ENCODE measurements at regions of chr11 and their contacts with region 1.

Region 1: GRCh38 chr11:120432056-120433018 is 79.2 kb upstream of the GRIK4 start:
- DNase-seq: no peak

Region 2: DNA sequence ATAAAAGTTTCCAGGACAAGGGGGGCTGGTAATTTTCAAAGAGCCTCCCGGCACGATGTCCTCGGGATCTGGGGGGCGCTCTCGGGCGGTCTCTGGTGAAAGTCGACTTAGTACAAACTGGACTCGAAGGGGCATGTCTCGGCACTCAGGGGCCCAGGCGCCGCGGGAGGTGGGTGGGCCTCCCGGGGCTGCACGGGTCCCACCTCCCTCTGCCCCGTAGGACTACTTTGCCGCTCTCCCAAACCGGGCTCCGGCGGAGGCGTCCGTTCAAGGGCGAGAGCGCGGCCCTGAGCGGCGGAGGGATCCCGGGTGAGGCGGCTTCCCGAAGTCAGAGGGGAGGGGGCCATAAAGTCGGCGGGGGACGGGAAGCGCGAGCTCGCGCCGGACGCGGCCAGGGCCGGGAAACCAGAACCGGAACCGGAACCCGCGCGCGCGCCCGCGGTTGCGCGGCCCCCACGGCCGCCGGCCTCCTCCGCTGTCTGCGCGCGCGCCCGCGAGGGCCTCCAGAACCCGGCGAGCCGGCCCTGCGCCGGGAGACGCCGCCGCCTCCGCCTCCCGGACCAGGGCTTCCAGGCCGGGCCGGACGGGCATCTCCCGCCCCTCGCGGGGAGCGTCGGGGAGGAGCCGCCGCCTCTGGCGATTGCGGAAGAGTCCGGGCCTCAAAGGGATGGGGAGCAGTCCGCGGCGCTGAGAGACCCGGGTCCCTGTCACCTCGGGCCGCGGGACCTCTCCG is 96.3 kb before region 1 on chr11 and contains the start of gene ARHGEF12:
- intact Hi-C with region 1: loop called in 1 of 2 experiments (anchors 5 kb)
- DNase-seq: peak; percentile 99
- total RNA-seq, gene ARHGEF12: 77.6 to 101 TPM

Region 3: DNA sequence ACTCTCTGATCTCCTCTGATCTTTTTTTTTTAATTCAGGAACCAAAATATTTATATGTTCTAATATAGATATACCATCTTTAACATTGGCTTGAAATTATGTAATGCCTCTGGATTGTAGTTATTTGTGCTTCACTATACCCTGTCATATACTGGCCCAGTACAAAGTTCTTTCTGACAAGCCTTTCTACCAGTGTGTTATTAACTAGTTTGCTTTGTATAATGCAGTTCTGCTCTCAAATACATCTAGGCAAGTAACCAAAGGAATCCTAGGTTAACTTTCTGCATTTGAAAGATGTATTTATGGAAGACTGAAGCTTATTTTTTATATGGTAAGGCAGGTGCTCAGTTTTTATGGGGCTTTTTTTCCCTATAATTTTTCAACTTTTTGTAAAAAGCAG is 60.0 kb before region 1 on chr11:
- intact Hi-C with region 1: loop called in 1 of 2 experiments (anchors 2 kb)
- DNase-seq: no peak

Region 4: DNA sequence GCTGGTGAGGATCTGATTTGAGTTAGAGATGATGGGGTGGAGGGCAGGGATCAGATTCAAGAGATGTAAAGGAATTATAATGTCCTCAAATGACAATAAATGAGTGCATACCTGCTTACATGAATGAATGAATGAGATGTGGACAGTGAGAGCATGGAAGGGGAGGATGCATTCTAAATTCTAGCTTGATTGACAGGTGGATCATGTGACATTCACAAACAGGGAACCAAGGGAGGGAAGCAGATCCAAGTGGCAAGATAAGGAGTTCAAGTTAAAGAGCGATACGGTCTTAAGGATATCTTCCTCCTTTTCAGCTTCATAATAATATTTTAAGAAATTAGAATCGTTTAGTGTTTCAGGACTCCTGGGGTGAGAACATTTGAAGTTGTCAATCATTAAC is 421.1 kb after region 1 on chr11:
- intact Hi-C with region 1: no loop called
- DNase-seq: no peak

Measured in posterior vena cava (tissue), 2 donors.